ENCODE measurements at regions of chr9 and their contacts with region 1.

Region 1: DNA sequence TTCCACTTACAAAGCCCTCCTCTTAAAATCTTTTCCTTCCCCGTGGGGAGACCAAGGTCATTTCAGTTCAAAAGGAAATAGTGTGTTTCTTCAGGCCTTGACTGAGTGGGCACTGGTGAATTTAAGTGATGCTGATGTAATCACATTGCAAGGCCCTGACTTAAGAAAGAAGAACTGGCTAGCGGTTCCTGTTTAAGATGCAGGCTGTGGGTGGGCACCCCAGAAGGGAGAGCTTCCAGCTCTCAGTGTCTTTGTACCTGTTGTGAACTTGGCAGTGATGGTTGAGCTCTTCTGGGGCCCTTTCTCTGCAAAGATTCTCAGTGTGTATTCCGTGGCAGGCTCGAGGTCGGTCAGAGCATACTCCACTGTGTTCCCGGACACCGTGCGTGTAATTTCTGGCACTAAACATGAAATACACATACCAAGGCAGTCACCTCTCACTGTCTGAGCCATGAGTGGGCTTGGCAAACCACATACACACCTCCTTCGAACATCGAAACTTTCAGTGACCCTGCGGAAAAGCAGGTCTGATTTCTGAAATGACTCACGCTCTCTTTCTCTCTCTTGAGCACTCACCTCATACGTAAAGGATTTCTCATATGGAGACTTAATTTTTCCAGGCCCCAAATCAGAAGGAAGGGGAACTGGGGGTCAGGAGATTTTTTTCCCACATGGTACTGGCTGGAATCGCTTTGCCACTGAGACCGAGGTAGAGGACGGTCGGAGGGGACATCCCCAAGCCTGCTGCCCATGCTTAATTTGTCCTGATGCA is 81.9 kb downstream of the TNC start:
- DNase-seq: no peak
- H3K4me3 ChIP-seq: no peak overlapping the region
- H3K27ac ChIP-seq: peak overlapping the region; percentile 75 to 84 (median 78)
- H3K4me1 ChIP-seq: peaks cover 3 to 32% (median 17%) of the 10 kb centered on the region in 4 donors
- H3K27me3 ChIP-seq: no peaks in the 10 kb centered on the region
- CTCF ChIP-seq: no peak
- EP300 ChIP-seq: peak; percentile 27
- POLR2A ChIP-seq: no peak

Region 2: GRCh38 chr9:114397848-114398605 is 638.0 kb before region 1 on chr9:
- in situ Hi-C with region 1: no loop called
- intact Hi-C with region 1: loop called (anchors 5 kb)
- DNase-seq: peak; percentile 99
- H3K4me3 ChIP-seq: peak overlapping the region; percentile 49 to 80 (median 68)
- H3K27ac ChIP-seq: peak overlapping the region; percentile 90 to 92 (median 91)
- H3K4me1 ChIP-seq: peaks cover 13 to 62% (median 44%) of the 10 kb centered on the region in 4 donors
- H3K27me3 ChIP-seq: no peaks in the 10 kb centered on the region
- CTCF ChIP-seq: peak in 2 of 5 experiments; percentile 31 to 38
- EP300 ChIP-seq: no peak
- POLR2A ChIP-seq: peak; percentile 92

Region 3: GRCh38 chr9:115132648-115133047 is 96.6 kb after region 1 on chr9:
- in situ Hi-C with region 1: no loop called
- intact Hi-C with region 1: loop called (anchors 10 kb)
- DNase-seq: no peak
- H3K4me3 ChIP-seq: no peak overlapping the region
- H3K27ac ChIP-seq: peak overlapping the region in 3 of 4 donors; percentile 60 to 72 (median 61)
- H3K4me1 ChIP-seq: peaks cover 0 to 9% (median 0%) of the 10 kb centered on the region in 4 donors
- H3K27me3 ChIP-seq: no peaks in the 10 kb centered on the region
- CTCF ChIP-seq: no peak
- EP300 ChIP-seq: no peak
- POLR2A ChIP-seq: no peak